ENCODE measurements at regions of chr1 and their contacts with region 1.

Region 1: GRCh38 chr1:98991127-98992012 is 13.3 kb downstream of the PLPPR5 start:
- DNase-seq: no peak
- ATAC-seq: peak in 2 of 4 donors; percentile 41 to 74
- H3K4me3 ChIP-seq: no peak overlapping the region
- H3K27ac ChIP-seq: no peak overlapping the region
- H3K4me1 ChIP-seq: no peaks in the 10 kb centered on the region
- H3K27me3 ChIP-seq: no peaks in the 10 kb centered on the region
- CTCF ChIP-seq: peak in 4 of 12 donors; percentile 4 to 23 (median 14)
- POLR2A ChIP-seq: no peak

Region 2: DNA sequence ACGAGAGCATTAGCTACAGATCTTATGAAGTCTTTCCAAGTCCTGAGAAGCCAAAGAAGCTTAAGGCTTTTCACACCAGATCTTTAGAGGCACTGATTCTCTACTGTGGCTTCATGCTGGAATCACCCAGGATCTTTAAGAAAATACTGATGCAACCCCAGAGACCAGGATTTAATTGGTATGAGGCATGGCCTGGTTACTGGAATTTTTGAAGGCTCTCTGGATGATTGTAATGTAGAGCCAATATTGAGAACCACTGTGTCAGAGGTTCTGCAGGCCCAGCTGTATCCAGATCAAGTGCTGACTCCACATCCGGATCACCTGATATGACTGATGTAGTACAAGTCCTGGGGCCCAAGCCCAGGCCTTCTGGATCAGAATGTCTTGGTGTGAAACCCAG is 92.4 kb before region 1 on chr1:
- intact Hi-C with region 1: no loop called
- DNase-seq: no peak
- ATAC-seq: no peak
- H3K4me3 ChIP-seq: no peak overlapping the region
- H3K27ac ChIP-seq: no peak overlapping the region
- H3K4me1 ChIP-seq: no peaks in the 10 kb centered on the region
- H3K27me3 ChIP-seq: no peaks in the 10 kb centered on the region
- CTCF ChIP-seq: no peak
- POLR2A ChIP-seq: no peak

Region 3: DNA sequence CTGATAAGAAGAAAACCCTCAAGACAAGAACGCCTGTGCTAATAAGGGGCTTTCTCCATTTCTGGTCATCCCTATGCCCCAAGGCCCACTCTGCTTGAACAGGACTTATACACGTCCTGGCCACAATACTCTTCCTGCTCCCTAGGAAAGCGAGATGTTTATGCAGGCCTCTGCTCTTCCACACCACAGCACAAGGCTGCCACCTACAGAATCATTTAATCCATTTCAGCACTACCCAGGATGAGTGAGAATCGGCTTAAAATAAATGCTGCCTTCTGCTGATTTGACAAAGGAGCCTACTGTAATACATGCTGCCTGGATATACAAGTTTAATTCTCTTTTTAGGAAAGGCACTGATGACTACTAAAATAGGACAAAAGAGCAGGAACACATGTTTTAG is 745.6 kb after region 1 on chr1:
- intact Hi-C with region 1: loop called in 1 of 10 experiments (anchors 10 kb)
- DNase-seq: peak in 2 of 5 donors; percentile 21 to 24
- ATAC-seq: peak; percentile 87 to 95 (median 90)
- H3K4me3 ChIP-seq: no peak overlapping the region
- H3K27ac ChIP-seq: peak overlapping the region in 1 of 12 donors; percentile 8
- H3K4me1 ChIP-seq: peaks cover 0 to 5% (median 0%) of the 10 kb centered on the region in 12 donors
- H3K27me3 ChIP-seq: no peaks in the 10 kb centered on the region
- CTCF ChIP-seq: peak; percentile 35 to 71 (median 56)
- POLR2A ChIP-seq: no peak

Measured in heart left ventricle (tissue), 16 donors.